MCF 10A (cell line): ENCODE measurements at regions of chr4 and their contacts with region 1.

Region 1: DNA sequence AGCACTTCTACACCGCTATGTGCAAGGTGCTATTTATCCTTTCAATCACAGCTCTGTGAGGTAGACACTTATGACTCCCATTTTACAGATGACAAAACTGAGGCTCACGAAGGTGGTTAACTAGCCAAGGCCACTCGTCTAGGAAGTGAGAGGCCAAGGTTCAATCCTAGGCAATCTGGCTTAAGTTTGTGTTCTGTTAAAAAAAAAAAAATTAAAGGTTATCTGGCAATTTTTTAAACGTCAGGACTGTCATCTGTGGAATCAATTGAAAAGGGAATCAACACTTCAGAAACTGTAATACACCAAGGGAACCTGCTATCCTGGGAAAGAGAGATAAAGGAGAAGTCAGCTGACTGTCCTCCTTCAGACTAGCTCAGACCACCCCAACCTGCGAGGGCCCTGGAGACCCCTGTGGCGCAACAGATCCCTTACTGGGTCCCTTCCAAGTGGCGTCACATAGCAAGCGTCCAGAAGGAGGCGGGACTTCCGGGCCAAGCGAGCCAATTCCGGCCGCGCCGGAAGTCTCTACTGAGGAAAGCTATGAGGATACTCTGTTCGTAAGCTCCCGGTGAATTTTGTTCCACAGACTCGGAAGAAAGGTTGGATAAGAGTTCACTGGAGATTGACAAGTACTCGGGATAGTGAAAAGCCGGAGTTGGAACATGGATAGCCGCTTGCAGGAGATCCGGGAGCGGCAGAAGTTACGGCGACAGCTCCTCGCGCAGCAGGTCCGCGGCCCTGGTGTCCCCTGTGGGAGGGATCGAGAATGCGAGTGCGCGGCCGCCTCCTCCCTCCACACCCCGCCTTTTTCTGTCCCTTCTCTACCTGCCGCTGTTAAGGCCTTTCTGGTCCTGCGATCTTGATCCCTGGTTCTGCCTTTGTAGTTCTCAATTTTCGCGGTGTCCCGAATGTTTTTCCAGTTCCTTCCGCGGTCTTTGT is at the start of gene METTL14:
- DNase-seq: peak; percentile 92
- H3K4me3 Mint-ChIP-seq: peak within 1 kb of the TSS; percentile 84
- H3K27ac Mint-ChIP-seq: peak within 1 kb of the TSS; percentile 82
- H3K4me1 Mint-ChIP-seq: peaks cover 14% of the 10 kb centered on the region
- H3K27me3 Mint-ChIP-seq: no peaks in the 10 kb centered on the region
- CTCF ChIP-seq: peak; percentile 11
- total RNA-seq, gene METTL14: 32.6 and 32.8 TPM in 2 replicates

Region 2: DNA sequence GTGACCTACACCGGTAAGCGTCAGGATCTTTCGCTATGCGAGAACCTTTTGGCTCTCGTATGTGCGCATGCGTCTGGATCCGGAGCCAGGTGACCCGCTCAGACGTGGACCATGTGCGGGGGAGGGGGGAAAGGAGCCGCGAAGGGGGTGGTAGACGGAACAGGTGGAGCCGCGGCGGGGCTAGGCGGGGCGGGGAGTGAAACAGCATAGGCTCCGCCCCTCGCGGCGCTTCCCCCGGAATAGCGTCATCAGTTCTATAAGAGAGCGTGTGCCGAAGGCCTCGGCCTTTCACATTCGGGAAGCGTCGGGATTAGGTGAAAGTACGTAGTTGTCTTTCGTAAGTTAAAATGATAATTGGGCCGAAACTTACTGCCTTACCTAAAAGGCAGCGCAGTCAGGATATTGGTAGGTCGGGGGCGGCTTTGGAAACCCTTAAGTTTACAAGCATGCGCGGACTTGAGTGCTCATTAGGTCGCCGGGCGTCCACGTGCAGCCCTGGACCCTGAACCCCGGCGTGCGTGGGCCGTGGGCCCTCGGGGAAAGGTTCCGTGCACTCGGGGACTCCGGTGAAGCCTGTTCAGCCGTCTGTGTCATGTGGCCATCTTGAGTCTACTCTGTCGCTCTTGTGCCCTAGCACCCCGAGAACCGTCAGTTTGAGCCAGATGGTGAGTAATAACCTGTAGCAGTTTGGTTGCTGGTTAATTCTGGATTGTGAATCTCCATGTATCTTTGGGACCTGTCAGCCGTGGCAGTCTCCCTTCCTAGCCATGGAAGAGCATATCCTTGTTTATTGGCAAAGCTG is 406.5 kb before region 1 on chr4:
- CTCF ChIA-PET with region 1: no interaction called
- POLR2A ChIA-PET with region 1: no interaction called
- intact Hi-C with region 1: loop called (anchors 10 kb)
- DNase-seq: peak; percentile 98
- H3K4me3 Mint-ChIP-seq: peak overlapping the region; percentile 81
- H3K27ac Mint-ChIP-seq: peak overlapping the region; percentile 99
- H3K4me1 Mint-ChIP-seq: peaks cover 25% of the 10 kb centered on the region
- H3K27me3 Mint-ChIP-seq: no peaks in the 10 kb centered on the region
- CTCF ChIP-seq: no peak